ENCODE measurements at regions of chr20 and their contacts with region 1.

Region 1: GRCh38 chr20:37178839-37179670 is at the starts of genes MROH8 and RPN2:
- DNase-seq: peak; percentile 98
- ATAC-seq: peak; percentile 98
- H3K4me3 ChIP-seq: peak within 1 kb of the TSS; percentile 77 to 94 (median 89)
- H3K27ac ChIP-seq: peak within 1 kb of the TSS; percentile 95
- H3K4me1 ChIP-seq: peaks cover 48% of the 10 kb centered on the region
- H3K27me3 ChIP-seq: no peaks in the 10 kb centered on the region; a peak in 1 of 5 replicates
- CTCF ChIP-seq: 0 out of 2 replicates have a peak, but pooled peaks have one; percentile 13
- EP300 ChIP-seq: peak in 1 of 2 experiments; percentile 6; a peak in 1 of 4 replicates
- POLR2A ChIP-seq: peak; percentile 77 to 79
- RAD21 ChIP-seq: peak; percentile 76
- total RNA-seq, gene MROH8: 5.5 and 6.1 TPM in 2 replicates
- total RNA-seq, gene RPN2: 284 and 587 TPM in 2 replicates

Region 2: GRCh38 chr20:36658300-36658699 is 520.8 kb before region 1 on chr20:
- CTCF ChIA-PET with region 1: no interaction called
- POLR2A ChIA-PET with region 1: no interaction called
- in situ Hi-C with region 1: no loop called
- intact Hi-C with region 1: no loop called
- DNase-seq: no peak
- ATAC-seq: no peak
- H3K4me3 ChIP-seq: no peak overlapping the region
- H3K27ac ChIP-seq: no peak overlapping the region
- H3K4me1 ChIP-seq: no peaks in the 10 kb centered on the region
- H3K27me3 ChIP-seq: no peaks in the 10 kb centered on the region
- CTCF ChIP-seq: no peak
- EP300 ChIP-seq: no peak
- POLR2A ChIP-seq: no peak
- RAD21 ChIP-seq: no peak

Region 3: GRCh38 chr20:37095599-37096414 is 83.2 kb before region 1 on chr20 and contains the start of gene RBL1:
- CTCF ChIA-PET with region 1: no interaction called
- POLR2A ChIA-PET with region 1: interaction called, 27 read pairs
- in situ Hi-C with region 1: no loop called
- intact Hi-C with region 1: loop called (anchors 1 kb)
- DNase-seq: peak; percentile 88
- ATAC-seq: peak; percentile 90
- H3K4me3 ChIP-seq: peak within 1 kb of the TSS; percentile 70 to 82 (median 71)
- H3K27ac ChIP-seq: peak within 1 kb of the TSS; percentile 79
- H3K4me1 ChIP-seq: peaks cover 34% of the 10 kb centered on the region
- H3K27me3 ChIP-seq: no peaks in the 10 kb centered on the region; a peak in 1 of 5 replicates
- CTCF ChIP-seq: peak; percentile 50
- EP300 ChIP-seq: peak; percentile 27 to 81; a peak in 3 of 4 replicates
- POLR2A ChIP-seq: peak; percentile 84 to 85
- RAD21 ChIP-seq: peak; percentile 77
- total RNA-seq, gene RBL1: 25.9 and 27.5 TPM in 2 replicates

Region 4: GRCh38 chr20:37162646-37163045 is 16.4 kb before region 1 on chr20:
- CTCF ChIA-PET with region 1: no interaction called
- POLR2A ChIA-PET with region 1: interaction called, 12 read pairs
- in situ Hi-C with region 1: no loop called
- intact Hi-C with region 1: no loop called
- DNase-seq: no peak
- ATAC-seq: no peak
- H3K4me3 ChIP-seq: no peak overlapping the region
- H3K27ac ChIP-seq: no peak overlapping the region
- H3K4me1 ChIP-seq: no peaks in the 10 kb centered on the region
- H3K27me3 ChIP-seq: no peaks in the 10 kb centered on the region
- CTCF ChIP-seq: no peak
- EP300 ChIP-seq: no peak
- POLR2A ChIP-seq: no peak
- RAD21 ChIP-seq: no peak

Region 5: DNA sequence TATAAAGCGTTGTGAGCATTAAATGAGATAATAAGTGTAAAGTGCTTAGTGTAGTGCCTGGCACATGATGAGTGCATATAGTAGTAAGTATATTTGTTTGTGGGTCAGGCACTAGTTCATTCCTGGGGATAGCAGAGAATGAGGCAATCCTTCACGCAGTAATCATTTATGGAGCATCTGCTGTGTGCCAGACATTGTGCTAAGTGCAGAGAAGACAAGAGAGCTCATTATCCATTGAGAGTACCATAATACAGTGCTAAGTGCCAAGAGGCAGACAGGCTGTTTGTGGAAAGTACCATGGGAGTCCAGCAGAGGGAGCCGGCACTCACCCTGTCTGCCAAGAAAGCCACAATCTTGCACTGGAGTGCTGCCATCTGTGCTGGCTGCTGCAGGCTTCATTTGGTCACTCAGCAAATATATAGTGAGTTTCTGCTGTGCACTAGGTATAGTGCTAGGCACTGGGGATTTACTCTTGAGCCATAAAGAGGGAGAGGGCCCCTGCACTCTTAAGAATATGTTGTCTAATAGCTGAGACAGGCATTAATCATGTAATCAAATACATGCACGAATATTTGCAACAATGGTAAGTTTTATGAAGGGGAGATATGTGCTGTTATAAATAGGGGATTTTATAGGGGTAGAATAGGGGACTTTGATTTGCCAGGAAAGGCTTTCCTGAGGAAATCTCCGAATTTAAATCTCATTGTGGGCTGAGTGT is 13.2 kb after region 1 on chr20:
- CTCF ChIA-PET with region 1: interaction called, 3 read pairs
- POLR2A ChIA-PET with region 1: interaction called, 36 read pairs
- in situ Hi-C with region 1: no loop called
- intact Hi-C with region 1: loop called (anchors 1 kb)
- DNase-seq: peak; percentile 80
- ATAC-seq: peak; percentile 89
- H3K4me3 ChIP-seq: no peak overlapping the region
- H3K27ac ChIP-seq: no peak overlapping the region
- H3K4me1 ChIP-seq: peaks cover 30% of the 10 kb centered on the region
- H3K27me3 ChIP-seq: no peaks in the 10 kb centered on the region
- CTCF ChIP-seq: peak; percentile 96
- EP300 ChIP-seq: no peak
- POLR2A ChIP-seq: peak in 1 of 2 experiments; percentile 30; a peak in 1 of 4 replicates
- RAD21 ChIP-seq: no peak; the same call in 1 of the 2 replicates

Region 6: GRCh38 chr20:37369846-37370245 is 190.8 kb after region 1 on chr20:
- CTCF ChIA-PET with region 1: no interaction called
- POLR2A ChIA-PET with region 1: no interaction called
- in situ Hi-C with region 1: no loop called
- intact Hi-C with region 1: no loop called
- DNase-seq: no peak
- ATAC-seq: no peak
- H3K4me3 ChIP-seq: no peak overlapping the region
- H3K27ac ChIP-seq: no peak overlapping the region
- H3K4me1 ChIP-seq: no peaks in the 10 kb centered on the region
- H3K27me3 ChIP-seq: no peaks in the 10 kb centered on the region
- CTCF ChIP-seq: no peak
- EP300 ChIP-seq: no peak
- POLR2A ChIP-seq: no peak
- RAD21 ChIP-seq: no peak